CD8-positive, alpha-beta memory T cell (primary cell): ENCODE measurements at regions of chr19 and their contacts with region 1.

Region 1: DNA sequence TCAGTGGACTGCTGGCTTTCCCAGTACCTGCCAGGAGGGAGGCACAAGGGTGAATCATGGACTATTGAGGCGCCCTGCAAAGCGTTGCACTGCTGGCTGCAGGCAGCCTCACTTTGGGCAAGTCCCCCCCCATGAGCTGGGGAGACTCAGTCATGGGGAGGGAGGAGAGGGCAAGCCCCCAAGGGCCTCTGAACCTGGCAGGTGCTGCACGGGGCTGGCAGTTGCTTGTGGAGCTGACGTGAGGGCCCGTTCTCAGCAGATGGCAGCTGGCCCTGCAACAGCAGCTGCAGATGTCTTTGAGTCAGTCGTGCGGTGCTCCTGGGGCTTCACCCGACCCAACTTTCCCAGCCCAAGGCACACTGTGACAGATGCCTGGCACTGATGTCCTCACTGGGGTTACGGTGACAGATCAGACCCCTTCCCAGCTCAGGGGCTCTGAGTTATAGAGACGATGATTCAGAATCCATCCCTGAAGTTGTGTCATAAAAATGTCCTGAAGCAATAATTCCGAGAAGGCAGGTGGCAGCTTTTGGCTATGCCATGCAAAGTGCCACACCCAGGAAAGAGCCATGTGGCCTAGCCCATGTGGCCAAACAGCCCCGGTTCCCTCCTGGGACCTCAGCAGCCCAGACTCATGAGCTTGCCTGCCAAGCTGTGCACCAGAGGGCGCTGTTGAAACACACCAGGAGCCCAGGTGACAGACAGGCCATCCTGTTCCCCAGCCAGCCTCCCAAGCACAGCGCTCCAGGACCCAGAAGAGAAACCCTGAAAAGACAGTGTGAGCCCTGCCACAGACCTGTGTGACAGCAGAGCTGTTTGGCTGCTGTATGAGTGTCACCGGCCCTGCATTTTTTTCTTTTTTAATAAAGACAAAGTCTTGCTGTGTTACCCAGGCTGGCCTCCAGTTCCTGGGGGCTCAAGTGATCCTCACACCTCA is 53.6 kb upstream of the LDLR start:
- DNase-seq: peak; percentile 67 to 90 (median 77)
- H3K4me3 ChIP-seq: no peak overlapping the region
- H3K4me3 Mint-ChIP-seq: no peak overlapping the region
- H3K27ac ChIP-seq: no peak overlapping the region
- H3K27ac Mint-ChIP-seq: peak overlapping the region in 7 of 8 donors; percentile 51 to 69 (median 62)
- H3K4me1 ChIP-seq: peaks cover 4% of the 10 kb centered on the region
- H3K4me1 Mint-ChIP-seq: peaks cover 5 to 8% (median 6%) of the 10 kb centered on the region in 3 donors
- H3K27me3 ChIP-seq: no peaks in the 10 kb centered on the region
- H3K27me3 Mint-ChIP-seq: no peaks in the 10 kb centered on the region

Region 2: DNA sequence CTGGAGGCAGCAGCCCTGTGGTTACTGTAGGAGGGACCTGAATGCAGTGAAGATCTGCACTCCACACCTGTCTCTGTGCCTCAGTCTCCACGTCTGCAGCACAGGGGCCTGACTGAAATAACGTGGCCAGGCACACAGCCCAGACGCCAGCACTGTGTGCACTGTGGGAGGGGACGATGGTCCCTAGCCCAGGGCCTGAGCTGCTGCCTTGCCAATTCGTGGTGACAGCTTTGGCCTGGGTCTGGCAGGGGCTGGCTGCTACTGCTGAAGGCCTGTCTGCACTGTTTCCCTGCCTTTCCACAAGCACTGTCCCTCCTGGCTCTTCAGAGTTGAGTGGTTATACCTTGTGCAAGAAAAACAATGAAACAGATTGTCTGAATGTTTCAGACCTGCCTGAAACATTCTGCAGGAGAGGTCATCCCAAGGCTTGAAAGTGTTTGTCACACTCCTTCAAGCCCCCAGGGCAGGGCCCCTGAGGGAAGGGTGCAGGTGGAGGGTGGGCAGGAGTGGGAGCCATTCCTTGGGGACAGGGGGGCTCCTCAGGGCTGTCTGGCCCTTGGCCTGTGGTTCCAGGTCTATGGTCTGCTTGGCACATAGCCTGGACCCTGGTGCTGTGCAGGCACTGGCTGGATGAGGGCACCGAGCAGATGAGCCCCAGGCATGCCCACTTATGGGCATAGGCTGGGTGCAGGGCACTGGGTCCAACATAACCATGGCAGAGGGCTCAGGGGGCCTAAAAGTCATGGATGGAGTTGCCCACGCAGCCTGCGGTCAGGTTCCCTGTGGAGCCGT is 14.8 kb after region 1 on chr19:
- CTCF ChIA-PET with region 1: interaction called, 14 read pairs
- POLR2A ChIA-PET with region 1: no interaction called
- DNase-seq: no peak
- H3K4me3 ChIP-seq: no peak overlapping the region
- H3K4me3 Mint-ChIP-seq: peak overlapping the region in 2 of 7 donors; percentile 75 to 76
- H3K27ac ChIP-seq: peak overlapping the region; percentile 6
- H3K27ac Mint-ChIP-seq: peak overlapping the region; percentile 71 to 96 (median 92)
- H3K4me1 ChIP-seq: peaks cover 42% of the 10 kb centered on the region
- H3K4me1 Mint-ChIP-seq: peaks cover 28 to 57% (median 45%) of the 10 kb centered on the region in 3 donors
- H3K27me3 ChIP-seq: no peaks in the 10 kb centered on the region
- H3K27me3 Mint-ChIP-seq: no peaks in the 10 kb centered on the region

Region 3: DNA sequence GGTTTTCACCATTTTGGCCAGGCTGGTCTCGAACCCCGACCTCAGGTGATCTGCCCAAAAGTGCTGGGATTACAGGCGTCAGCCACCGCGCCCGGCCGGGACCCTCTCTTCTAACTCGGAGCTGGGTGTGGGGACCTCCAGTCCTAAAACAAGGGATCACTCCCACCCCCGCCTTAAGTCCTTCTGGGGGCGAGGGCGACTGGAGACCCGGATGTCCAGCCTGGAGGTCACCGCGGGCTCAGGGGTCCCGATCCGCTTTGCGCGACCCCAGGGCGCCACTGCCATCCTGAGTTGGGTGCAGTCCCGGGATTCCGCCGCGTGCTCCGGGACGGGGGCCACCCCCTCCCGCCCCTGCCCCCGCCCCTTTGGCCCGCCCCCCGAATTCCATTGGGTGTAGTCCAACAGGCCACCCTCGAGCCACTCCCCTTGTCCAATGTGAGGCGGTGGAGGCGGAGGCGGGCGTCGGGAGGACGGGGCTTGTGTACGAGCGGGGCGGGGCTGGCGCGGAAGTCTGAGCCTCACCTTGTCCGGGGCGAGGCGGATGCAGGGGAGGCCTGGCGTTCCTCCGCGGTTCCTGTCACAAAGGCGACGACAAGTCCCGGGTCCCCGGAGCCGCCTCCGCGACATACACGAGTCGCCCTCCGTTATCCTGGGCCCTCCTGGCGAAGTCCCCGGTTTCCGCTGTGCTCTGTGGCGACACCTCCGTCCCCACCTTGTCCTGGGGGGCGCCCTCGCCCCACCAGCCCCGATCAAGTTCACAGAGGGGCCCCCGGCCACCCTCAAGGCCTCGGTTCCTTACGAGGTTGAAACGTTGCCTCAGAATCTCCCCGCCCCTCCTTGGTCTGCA is 54.6 kb after region 1 on chr19:
- CTCF ChIA-PET with region 1: interaction called, 32 read pairs
- POLR2A ChIA-PET with region 1: interaction called, 3 read pairs
- DNase-seq: peak; percentile 95 to 99 (median 96)
- H3K4me3 ChIP-seq: peak overlapping the region; percentile 78
- H3K4me3 Mint-ChIP-seq: peak overlapping the region; percentile 83 to 93 (median 87)
- H3K27ac ChIP-seq: peak overlapping the region; percentile 98
- H3K27ac Mint-ChIP-seq: peak overlapping the region; percentile 95 to 99 (median 99)
- H3K4me1 ChIP-seq: peaks cover 57% of the 10 kb centered on the region
- H3K4me1 Mint-ChIP-seq: peaks cover 39 to 58% (median 50%) of the 10 kb centered on the region in 3 donors
- H3K27me3 ChIP-seq: no peaks in the 10 kb centered on the region
- H3K27me3 Mint-ChIP-seq: no peaks in the 10 kb centered on the region

Region 4: GRCh38 chr19:11096210-11096841 is 60.6 kb after region 1 on chr19:
- CTCF ChIA-PET with region 1: interaction called, 32 read pairs
- POLR2A ChIA-PET with region 1: interaction called, 3 read pairs
- DNase-seq: peak in 1 of 5 donors; percentile 26
- H3K4me3 ChIP-seq: peak overlapping the region; percentile 4
- H3K4me3 Mint-ChIP-seq: peak overlapping the region; percentile 14 to 82 (median 76)
- H3K27ac ChIP-seq: peak overlapping the region; percentile 62
- H3K27ac Mint-ChIP-seq: peak overlapping the region; percentile 90 to 98 (median 96)
- H3K4me1 ChIP-seq: peaks cover 45% of the 10 kb centered on the region
- H3K4me1 Mint-ChIP-seq: peaks cover 41 to 59% (median 54%) of the 10 kb centered on the region in 3 donors
- H3K27me3 ChIP-seq: no peaks in the 10 kb centered on the region
- H3K27me3 Mint-ChIP-seq: no peaks in the 10 kb centered on the region

Region 5: DNA sequence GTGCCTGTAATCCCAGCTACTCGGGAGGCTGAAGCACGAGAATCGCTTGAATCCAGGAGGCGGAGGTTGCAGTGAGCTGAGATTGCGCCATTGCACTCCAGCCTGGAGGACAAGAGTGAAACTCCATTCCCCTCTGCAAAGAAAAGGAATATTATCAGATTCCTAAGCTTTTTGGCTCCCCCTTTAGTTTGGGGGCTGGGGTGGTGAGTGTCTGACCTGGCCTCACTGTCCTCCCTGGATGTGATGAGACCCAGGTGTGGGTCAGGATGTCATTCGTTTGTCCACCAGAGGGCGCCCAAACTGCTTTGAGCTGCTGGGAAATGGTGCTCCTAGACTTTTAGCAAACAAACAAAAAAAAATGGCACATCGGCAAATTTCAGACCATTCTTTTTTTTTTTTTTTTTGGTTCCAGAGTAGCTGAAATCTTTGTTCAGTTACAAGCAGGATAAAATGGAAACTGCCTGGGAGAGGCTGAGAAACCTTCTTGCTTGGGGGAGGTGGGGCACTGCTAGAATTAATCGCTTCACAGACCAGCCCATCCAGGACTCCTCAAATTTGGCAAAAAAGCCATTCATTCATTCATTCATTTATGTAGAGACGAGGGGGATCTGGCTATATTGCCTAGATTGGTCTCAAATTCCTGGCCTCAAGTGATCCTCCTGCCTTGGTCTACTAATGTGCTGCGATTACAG is 90.4 kb after region 1 on chr19:
- CTCF ChIA-PET with region 1: interaction called, 55 read pairs
- POLR2A ChIA-PET with region 1: interaction called, 3 read pairs
- DNase-seq: peak; percentile 53 to 84 (median 64)
- H3K4me3 ChIP-seq: no peak overlapping the region
- H3K4me3 Mint-ChIP-seq: no peak overlapping the region
- H3K27ac ChIP-seq: no peak overlapping the region
- H3K27ac Mint-ChIP-seq: peak overlapping the region in 5 of 8 donors; percentile 31 to 54 (median 47)
- H3K4me1 ChIP-seq: peaks cover 3% of the 10 kb centered on the region
- H3K4me1 Mint-ChIP-seq: peaks cover 0 to 4% (median 1%) of the 10 kb centered on the region in 3 donors
- H3K27me3 ChIP-seq: no peaks in the 10 kb centered on the region
- H3K27me3 Mint-ChIP-seq: no peaks in the 10 kb centered on the region

Region 6: DNA sequence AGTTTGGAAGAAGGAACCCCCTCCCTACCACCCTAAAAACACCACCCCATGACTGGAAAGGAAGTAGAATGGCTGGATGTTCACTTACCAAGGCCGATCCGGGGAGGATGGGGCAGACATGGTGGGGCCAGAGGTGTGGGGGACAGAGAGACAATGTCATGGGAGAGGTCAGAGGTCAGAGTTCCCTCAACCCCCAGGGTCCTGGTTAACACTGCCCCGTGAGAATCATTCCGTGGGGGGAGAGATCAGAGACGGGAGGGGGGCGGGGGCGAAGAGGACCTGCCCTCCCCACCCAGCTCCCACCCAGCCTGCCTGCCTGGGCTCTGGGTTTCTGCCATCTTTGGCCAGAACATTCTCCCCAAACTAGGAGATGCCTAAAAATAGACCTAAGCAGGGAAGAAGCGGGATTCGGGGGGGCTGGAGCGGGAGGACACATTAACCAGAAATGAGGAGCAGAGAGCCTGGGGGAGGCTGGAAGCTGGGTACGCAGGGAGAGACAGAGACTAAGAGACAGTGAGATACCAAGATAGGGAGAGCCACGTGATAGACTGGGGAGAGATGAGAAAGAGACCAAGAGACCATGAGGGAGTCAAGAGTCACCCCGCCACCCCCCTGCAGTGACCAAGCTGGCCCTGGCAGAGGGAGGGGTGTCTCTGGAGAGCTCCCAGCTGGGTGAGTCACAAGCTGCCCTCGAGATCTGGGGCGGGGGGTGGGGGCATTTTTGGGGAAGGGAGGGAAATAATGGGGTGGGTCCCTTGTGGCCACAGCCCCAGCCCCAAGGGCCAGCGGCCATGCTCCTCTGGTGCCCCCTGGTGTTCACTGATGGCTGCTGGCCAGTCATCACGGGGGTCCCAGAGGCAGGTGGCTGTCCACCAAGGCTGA is 167.7 kb after region 1 on chr19:
- CTCF ChIA-PET with region 1: interaction called, 12 read pairs
- POLR2A ChIA-PET with region 1: no interaction called
- DNase-seq: peak in 1 of 5 donors; percentile 18
- H3K4me3 ChIP-seq: no peak overlapping the region
- H3K4me3 Mint-ChIP-seq: peak overlapping the region in 1 of 7 donors; percentile 59
- H3K27ac ChIP-seq: no peak overlapping the region
- H3K27ac Mint-ChIP-seq: peak overlapping the region in 2 of 8 donors; percentile 60 to 66
- H3K4me1 ChIP-seq: no peaks in the 10 kb centered on the region
- H3K4me1 Mint-ChIP-seq: no peaks in the 10 kb centered on the region
- H3K27me3 ChIP-seq: no peaks in the 10 kb centered on the region
- H3K27me3 Mint-ChIP-seq: peaks cover 6 to 9% of the 10 kb centered on the region in 2 donors